IMR-90 (cell line): ENCODE measurements at regions of chr7 and their contacts with region 1.

Region 1: GRCh38 chr7:6589829-6590644 is at the start of gene INTS15:
- DNase-seq: peak; percentile 77
- ATAC-seq: peak; percentile 94
- H3K4me3 ChIP-seq: peak within 1 kb of the TSS; percentile 98
- H3K27ac ChIP-seq: peak within 1 kb of the TSS; percentile 86
- H3K4me1 ChIP-seq: peaks cover 3% of the 10 kb centered on the region; the same call in 1 of the 2 replicates
- H3K27me3 ChIP-seq: no peaks in the 10 kb centered on the region
- CTCF ChIP-seq: peak; percentile 95
- POLR2A ChIP-seq: peak; percentile 84
- RAD21 ChIP-seq: peak; percentile 51
- total RNA-seq, gene INTS15: 6.1 and 7.0 TPM in 2 replicates

Region 2: GRCh38 chr7:6398943-6399342 is 191.1 kb before region 1 on chr7:
- CTCF ChIA-PET with region 1: no interaction called
- POLR2A ChIA-PET with region 1: no interaction called
- dilution Hi-C with region 1: no loop called
- in situ Hi-C with region 1: no loop called
- intact Hi-C with region 1: no loop called
- DNase-seq: no peak
- ATAC-seq: no peak
- H3K4me3 ChIP-seq: no peak overlapping the region
- H3K27ac ChIP-seq: no peak overlapping the region; the same call in 1 of the 2 replicates
- H3K4me1 ChIP-seq: peaks cover 5% of the 10 kb centered on the region; the same call in 1 of the 2 replicates
- H3K27me3 ChIP-seq: no peaks in the 10 kb centered on the region
- CTCF ChIP-seq: no peak
- POLR2A ChIP-seq: no peak
- RAD21 ChIP-seq: no peak

Region 3: GRCh38 chr7:6558837-6559236 is 31.2 kb before region 1 on chr7:
- CTCF ChIA-PET with region 1: no interaction called
- POLR2A ChIA-PET with region 1: no interaction called
- dilution Hi-C with region 1: no loop called
- in situ Hi-C with region 1: no loop called
- intact Hi-C with region 1: no loop called
- DNase-seq: peak; percentile 21
- ATAC-seq: peak; percentile 63
- H3K4me3 ChIP-seq: no peak overlapping the region
- H3K27ac ChIP-seq: no peak overlapping the region
- H3K4me1 ChIP-seq: no peaks in the 10 kb centered on the region
- H3K27me3 ChIP-seq: peaks cover 2% of the 10 kb centered on the region; the same call in 1 of the 2 replicates
- CTCF ChIP-seq: 0 out of 2 replicates have a peak, but pooled peaks have one; percentile 27
- POLR2A ChIP-seq: no peak
- RAD21 ChIP-seq: peak; percentile 15; the same call in 1 of the 2 replicates

Region 4: GRCh38 chr7:6577365-6578113 is 12.5 kb before region 1 on chr7 and contains the start of gene ZDHHC4:
- CTCF ChIA-PET with region 1: interaction called, 10 read pairs
- POLR2A ChIA-PET with region 1: interaction called, 21 read pairs
- dilution Hi-C with region 1: no loop called
- in situ Hi-C with region 1: no loop called
- intact Hi-C with region 1: no loop called
- DNase-seq: peak; percentile 85
- ATAC-seq: peak; percentile 98
- H3K4me3 ChIP-seq: peak within 1 kb of the TSS; percentile 70
- H3K27ac ChIP-seq: peak within 1 kb of the TSS; percentile 71
- H3K4me1 ChIP-seq: peaks cover 6% of the 10 kb centered on the region
- H3K27me3 ChIP-seq: no peaks in the 10 kb centered on the region
- CTCF ChIP-seq: no peak
- POLR2A ChIP-seq: peak; percentile 93
- RAD21 ChIP-seq: no peak
- total RNA-seq, gene ZDHHC4: 40.0 and 58.3 TPM in 2 replicates